Left ventricle myocardium inferior (tissue), 1 donor: ENCODE measurements at regions of chr5 and their contacts with region 1.

Region 1: GRCh38 chr5:141968914-141969608 is at the start of gene RNF14:
- DNase-seq: peak; percentile 94
- H3K4me3 ChIP-seq: peak within 1 kb of the TSS; percentile 89
- H3K27ac ChIP-seq: peak within 1 kb of the TSS; percentile 99
- H3K4me1 ChIP-seq: peaks cover 48% of the 10 kb centered on the region
- H3K27me3 ChIP-seq: no peaks in the 10 kb centered on the region
- CTCF ChIP-seq: peak; percentile 98
- total RNA-seq, gene RNF14: 120 TPM

Region 2: GRCh38 chr5:141914199-141914743 is 54.8 kb before region 1 on chr5:
- intact Hi-C with region 1: loop called (anchors 10 kb)
- DNase-seq: peak; percentile 48
- H3K4me3 ChIP-seq: peak overlapping the region; percentile 62
- H3K27ac ChIP-seq: no peak overlapping the region
- H3K4me1 ChIP-seq: peaks cover 16% of the 10 kb centered on the region
- H3K27me3 ChIP-seq: no peaks in the 10 kb centered on the region
- CTCF ChIP-seq: peak; percentile 63

Region 3: DNA sequence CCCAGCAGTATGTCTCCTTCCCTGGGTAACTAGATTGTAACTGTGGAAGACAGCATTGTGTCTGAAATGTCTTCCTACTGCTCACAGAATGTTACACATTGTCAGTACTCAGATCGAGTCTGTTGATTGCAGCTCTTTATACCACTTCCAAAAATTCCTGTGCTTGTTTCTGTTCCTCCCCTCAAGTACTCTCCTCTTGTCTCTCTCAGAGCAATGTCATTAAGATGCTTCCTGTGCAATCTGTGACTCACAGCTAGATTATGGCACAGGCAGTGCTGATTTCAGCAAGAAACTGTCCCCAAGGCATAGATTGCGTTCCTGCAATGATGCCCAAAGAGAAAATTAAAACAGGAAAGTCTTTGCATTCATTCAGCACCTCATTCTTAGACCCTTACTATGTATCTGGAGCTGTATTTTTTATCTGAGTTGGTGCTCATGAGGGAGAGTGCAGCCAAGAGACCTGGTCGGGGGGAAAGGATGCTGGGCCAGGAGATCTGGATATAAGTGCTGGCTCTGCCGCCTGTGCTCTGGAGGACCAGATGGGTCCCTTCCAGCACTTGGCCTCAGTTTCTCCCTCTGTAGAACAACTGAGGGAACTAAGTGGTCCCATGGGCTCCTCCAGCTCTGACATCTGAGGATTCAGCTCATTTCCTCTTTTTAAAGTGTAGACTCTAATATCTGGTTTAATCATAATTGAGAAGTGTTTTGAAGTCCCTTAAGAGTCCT is 84.5 kb after region 1 on chr5:
- intact Hi-C with region 1: no loop called
- DNase-seq: no peak
- H3K4me3 ChIP-seq: no peak overlapping the region
- H3K27ac ChIP-seq: peak overlapping the region; percentile 63
- H3K4me1 ChIP-seq: peaks cover 18% of the 10 kb centered on the region
- H3K27me3 ChIP-seq: no peaks in the 10 kb centered on the region
- CTCF ChIP-seq: no peak

Region 4: DNA sequence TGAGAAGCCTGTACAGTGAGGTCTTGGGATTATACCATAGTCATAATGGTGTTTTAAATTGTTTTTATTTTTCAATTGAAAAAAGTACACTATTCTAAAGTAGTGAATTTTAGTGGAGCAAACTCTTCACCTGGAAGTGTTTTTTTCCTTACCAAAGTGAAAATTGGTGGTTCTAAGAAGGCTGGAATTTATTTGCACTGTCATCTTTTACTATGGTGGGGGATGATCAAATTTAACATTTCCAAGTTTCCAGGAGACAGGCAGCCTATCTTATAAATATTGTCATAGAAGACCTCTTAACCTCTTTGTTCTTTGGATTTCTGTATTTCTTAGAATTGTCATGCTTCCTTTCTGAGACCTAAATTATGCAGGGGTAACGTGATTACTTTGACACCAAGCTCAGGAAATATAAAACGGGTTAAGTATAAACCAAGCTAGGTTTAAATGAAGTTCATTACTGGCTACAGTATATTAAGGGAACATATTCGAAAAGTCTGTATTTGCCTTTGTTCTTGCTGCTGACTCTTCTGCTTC is 159.7 kb after region 1 on chr5:
- intact Hi-C with region 1: no loop called
- DNase-seq: no peak
- H3K4me3 ChIP-seq: no peak overlapping the region
- H3K27ac ChIP-seq: no peak overlapping the region
- H3K4me1 ChIP-seq: peaks cover 47% of the 10 kb centered on the region
- H3K27me3 ChIP-seq: no peaks in the 10 kb centered on the region
- CTCF ChIP-seq: no peak